Activated B cell treated with CpG ODN at 0.5 μM for 24 hours (primary cell): ENCODE measurements at regions of chr14 and their contacts with region 1.

Region 1: GRCh38 chr14:68210729-68211299 is 391.2 kb downstream of the RAD51B start:
- DNase-seq: no peak
- ATAC-seq: peak; percentile 87
- H3K4me3 Mint-ChIP-seq: peak overlapping the region; percentile 64
- H3K27ac Mint-ChIP-seq: peak overlapping the region; percentile 84
- H3K4me1 Mint-ChIP-seq: peaks cover 54% of the 10 kb centered on the region
- H3K27me3 Mint-ChIP-seq: no peaks in the 10 kb centered on the region
- CTCF ChIP-seq: no peak

Region 2: GRCh38 chr14:67963960-67964744 is 246.7 kb before region 1 on chr14:
- CTCF ChIA-PET with region 1: no interaction called
- POLR2A ChIA-PET with region 1: no interaction called
- intact Hi-C with region 1: loop called (anchors 5 kb)
- DNase-seq: no peak
- ATAC-seq: no peak
- H3K4me3 Mint-ChIP-seq: no peak overlapping the region
- H3K27ac Mint-ChIP-seq: no peak overlapping the region
- H3K4me1 Mint-ChIP-seq: peaks cover 20% of the 10 kb centered on the region
- H3K27me3 Mint-ChIP-seq: no peaks in the 10 kb centered on the region
- CTCF ChIP-seq: no peak

Region 3: GRCh38 chr14:68191567-68192321 is 19.1 kb before region 1 on chr14:
- CTCF ChIA-PET with region 1: no interaction called
- POLR2A ChIA-PET with region 1: no interaction called
- intact Hi-C with region 1: no loop called
- DNase-seq: no peak
- ATAC-seq: no peak
- H3K4me3 Mint-ChIP-seq: no peak overlapping the region
- H3K27ac Mint-ChIP-seq: no peak overlapping the region
- H3K4me1 Mint-ChIP-seq: no peaks in the 10 kb centered on the region
- H3K27me3 Mint-ChIP-seq: no peaks in the 10 kb centered on the region
- CTCF ChIP-seq: no peak

Region 4: DNA sequence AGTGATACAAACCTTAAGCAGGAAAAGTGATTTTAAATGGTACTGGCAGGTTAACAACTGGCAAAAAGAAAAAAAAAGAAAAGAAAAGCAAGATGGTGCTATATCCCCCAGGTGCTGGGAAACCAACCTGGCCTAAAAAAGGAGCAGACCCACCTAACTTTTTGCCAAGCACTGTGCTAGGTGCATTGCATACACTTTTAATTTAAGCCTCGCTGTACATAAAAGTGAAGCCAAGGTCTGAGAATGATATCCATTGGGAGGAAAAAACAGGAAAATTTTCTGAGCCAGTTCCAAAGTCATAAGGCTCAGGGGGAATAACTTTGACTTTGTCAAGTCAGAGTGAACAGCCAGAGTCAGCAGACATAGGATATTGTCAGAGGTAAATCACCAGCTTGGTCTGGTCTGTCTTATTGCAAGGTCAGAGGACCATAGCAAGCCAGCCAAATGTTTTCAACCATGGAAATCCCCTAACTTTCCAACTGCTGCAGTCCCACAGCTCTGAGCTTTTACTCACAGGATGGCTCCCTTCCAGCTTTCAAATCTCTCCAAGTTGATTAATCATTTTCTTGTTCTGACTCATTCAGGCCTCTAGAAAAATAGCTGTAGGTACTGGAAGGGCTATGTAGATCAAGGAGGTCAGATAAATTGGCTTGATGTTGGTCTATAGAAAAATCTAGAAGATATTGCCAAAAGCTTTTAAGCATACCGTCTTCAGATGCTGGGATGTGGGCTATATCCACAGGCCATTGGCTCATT is 21.7 kb after region 1 on chr14:
- CTCF ChIA-PET with region 1: no interaction called
- POLR2A ChIA-PET with region 1: no interaction called
- intact Hi-C with region 1: loop called (anchors 2 kb)
- DNase-seq: no peak
- ATAC-seq: peak; percentile 91
- H3K4me3 Mint-ChIP-seq: no peak overlapping the region
- H3K27ac Mint-ChIP-seq: no peak overlapping the region
- H3K4me1 Mint-ChIP-seq: peaks cover 2% of the 10 kb centered on the region
- H3K27me3 Mint-ChIP-seq: no peaks in the 10 kb centered on the region
- CTCF ChIP-seq: no peak

Region 5: DNA sequence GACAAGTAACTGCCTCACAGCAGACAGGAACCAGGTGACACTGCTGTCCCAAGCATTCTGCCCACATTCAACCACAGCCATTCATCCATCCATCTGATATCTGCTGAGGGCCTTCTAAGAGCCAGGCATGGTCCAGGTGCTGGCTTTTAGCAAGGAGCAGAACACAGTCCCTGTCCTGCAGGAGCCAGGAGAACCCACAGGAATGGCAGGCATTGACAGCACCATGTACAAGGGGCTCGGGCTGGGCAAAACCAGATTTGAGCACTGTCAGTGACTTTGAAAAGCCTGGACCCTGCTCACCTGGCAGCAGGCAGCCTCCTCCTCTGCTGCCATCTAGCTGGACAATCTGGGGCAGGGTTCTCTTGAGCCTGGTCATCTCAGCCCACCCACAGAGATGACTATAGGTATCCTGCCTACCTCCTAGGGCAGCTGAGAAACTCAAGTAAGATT is 445.1 kb after region 1 on chr14:
- CTCF ChIA-PET with region 1: no interaction called
- POLR2A ChIA-PET with region 1: no interaction called
- intact Hi-C with region 1: no loop called
- DNase-seq: no peak
- ATAC-seq: no peak
- H3K4me3 Mint-ChIP-seq: no peak overlapping the region
- H3K27ac Mint-ChIP-seq: no peak overlapping the region
- H3K4me1 Mint-ChIP-seq: peaks cover 19% of the 10 kb centered on the region
- H3K27me3 Mint-ChIP-seq: no peaks in the 10 kb centered on the region
- CTCF ChIP-seq: no peak